Activated T-helper 2 cell treated with anti-CD3 and anti-CD28 coated beads, Interferon-gamma antibody, Interleukin-2, Interleukin-4, amounts not matched to agents 10 μg/mL and 5 μg/mL and 100 μg/mL, durations not matched to agents 14 hours and 24 hours and 36 hours (primary cell): ENCODE measurements at regions of chr6 and their contacts with region 1.

Region 1: DNA sequence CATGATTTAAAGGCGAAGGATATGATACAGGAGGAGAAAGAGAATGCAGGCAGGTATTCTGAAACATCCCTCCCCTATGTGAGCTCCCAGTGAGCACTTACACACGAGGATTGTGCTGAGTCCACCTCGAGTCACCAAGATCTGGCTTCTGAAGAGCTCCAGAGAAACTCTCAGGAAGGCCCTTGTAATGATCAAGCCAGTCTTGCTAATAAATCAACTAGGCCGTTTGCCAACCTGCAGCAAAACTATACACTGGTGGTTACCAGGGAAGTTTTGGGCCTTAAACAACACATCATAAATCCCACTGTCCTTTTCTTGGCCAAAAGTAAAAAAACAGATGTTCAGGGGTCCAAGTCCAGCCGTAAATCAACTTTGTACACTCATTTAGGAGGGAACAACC is 79.2 kb downstream of the STXBP5 start:
- DNase-seq: no peak
- H3K4me3 Mint-ChIP-seq: no peak overlapping the region
- H3K27ac Mint-ChIP-seq: peak overlapping the region; percentile 55
- H3K4me1 Mint-ChIP-seq: peaks cover 46% of the 10 kb centered on the region
- H3K27me3 Mint-ChIP-seq: no peaks in the 10 kb centered on the region

Region 2: GRCh38 chr6:146850238-146850896 is 433.1 kb before region 1 on chr6:
- intact Hi-C with region 1: loop called (anchors 2 kb)
- DNase-seq: no peak
- H3K4me3 Mint-ChIP-seq: no peak overlapping the region
- H3K27ac Mint-ChIP-seq: peak overlapping the region; percentile 81
- H3K4me1 Mint-ChIP-seq: peaks cover 36% of the 10 kb centered on the region
- H3K27me3 Mint-ChIP-seq: no peaks in the 10 kb centered on the region

Region 3: GRCh38 chr6:147016440-147016839 is 267.0 kb before region 1 on chr6:
- intact Hi-C with region 1: no loop called
- DNase-seq: no peak
- H3K4me3 Mint-ChIP-seq: no peak overlapping the region
- H3K27ac Mint-ChIP-seq: no peak overlapping the region
- H3K4me1 Mint-ChIP-seq: peaks cover 8% of the 10 kb centered on the region
- H3K27me3 Mint-ChIP-seq: no peaks in the 10 kb centered on the region

Region 4: GRCh38 chr6:147184379-147184778 is 99.1 kb before region 1 on chr6:
- intact Hi-C with region 1: no loop called
- DNase-seq: no peak
- H3K4me3 Mint-ChIP-seq: no peak overlapping the region
- H3K27ac Mint-ChIP-seq: no peak overlapping the region
- H3K4me1 Mint-ChIP-seq: no peaks in the 10 kb centered on the region
- H3K27me3 Mint-ChIP-seq: peaks cover 2% of the 10 kb centered on the region

Region 5: GRCh38 chr6:147194652-147195411 is 88.6 kb before region 1 on chr6:
- intact Hi-C with region 1: loop called (anchors 2 kb)
- DNase-seq: no peak
- H3K4me3 Mint-ChIP-seq: no peak overlapping the region
- H3K27ac Mint-ChIP-seq: peak overlapping the region; percentile 78
- H3K4me1 Mint-ChIP-seq: peaks cover 22% of the 10 kb centered on the region
- H3K27me3 Mint-ChIP-seq: no peaks in the 10 kb centered on the region

Region 6: GRCh38 chr6:147268254-147268653 is 15.2 kb before region 1 on chr6:
- intact Hi-C with region 1: loop called (anchors 1 kb)
- DNase-seq: no peak
- H3K4me3 Mint-ChIP-seq: no peak overlapping the region
- H3K27ac Mint-ChIP-seq: peak overlapping the region; percentile 77
- H3K4me1 Mint-ChIP-seq: peaks cover 15% of the 10 kb centered on the region
- H3K27me3 Mint-ChIP-seq: no peaks in the 10 kb centered on the region

Region 7: GRCh38 chr6:147311218-147311617 is 27.8 kb after region 1 on chr6:
- intact Hi-C with region 1: no loop called
- DNase-seq: no peak
- H3K4me3 Mint-ChIP-seq: no peak overlapping the region
- H3K27ac Mint-ChIP-seq: no peak overlapping the region
- H3K4me1 Mint-ChIP-seq: peaks cover 1% of the 10 kb centered on the region
- H3K27me3 Mint-ChIP-seq: no peaks in the 10 kb centered on the region

Region 8: DNA sequence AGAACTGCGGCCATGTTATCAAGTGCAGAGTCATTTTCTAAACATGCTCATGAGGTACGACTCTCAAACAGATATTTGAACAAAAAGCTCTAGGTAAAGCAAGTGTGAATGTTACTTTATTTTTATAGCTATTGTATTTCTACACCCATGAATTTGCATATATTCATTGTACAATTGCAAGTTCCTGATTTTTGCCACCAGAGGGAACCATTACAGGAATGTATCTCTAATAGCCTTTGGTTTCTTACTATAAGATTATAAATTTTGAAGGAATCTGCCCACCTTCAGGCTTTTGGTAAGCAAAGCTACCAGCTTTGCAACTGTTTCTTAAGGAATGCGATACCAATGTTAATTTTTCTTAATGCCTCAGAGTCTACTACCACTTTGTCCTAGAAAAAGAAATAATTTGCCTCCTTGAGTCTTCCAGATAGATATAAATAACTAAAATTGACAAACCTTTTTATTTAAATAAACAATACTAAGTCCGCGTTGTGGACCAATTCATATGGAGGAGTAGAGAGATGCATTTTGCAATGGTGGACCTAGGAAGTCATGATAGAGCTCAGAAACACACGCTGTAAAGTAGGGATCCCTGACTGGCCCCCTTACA is 99.6 kb after region 1 on chr6:
- intact Hi-C with region 1: loop called (anchors 5 kb)
- DNase-seq: no peak
- H3K4me3 Mint-ChIP-seq: no peak overlapping the region
- H3K27ac Mint-ChIP-seq: no peak overlapping the region
- H3K4me1 Mint-ChIP-seq: peaks cover 13% of the 10 kb centered on the region
- H3K27me3 Mint-ChIP-seq: no peaks in the 10 kb centered on the region

Region 9: GRCh38 chr6:147787417-147787816 is 504.0 kb after region 1 on chr6:
- intact Hi-C with region 1: no loop called
- DNase-seq: no peak
- H3K4me3 Mint-ChIP-seq: no peak overlapping the region
- H3K27ac Mint-ChIP-seq: no peak overlapping the region
- H3K4me1 Mint-ChIP-seq: no peaks in the 10 kb centered on the region
- H3K27me3 Mint-ChIP-seq: no peaks in the 10 kb centered on the region